ENCODE measurements at regions of chr14 and their contacts with region 1.

Region 1: GRCh38 chr14:24058260-24058950 is 6.6 kb downstream of the CARMIL3 start:
- DNase-seq: peak; percentile 84
- H3K4me3 Mint-ChIP-seq: no peak overlapping the region
- H3K27ac Mint-ChIP-seq: peak overlapping the region; percentile 19
- H3K4me1 Mint-ChIP-seq: peaks cover 6% of the 10 kb centered on the region
- H3K27me3 Mint-ChIP-seq: peaks cover 44% of the 10 kb centered on the region

Region 2: GRCh38 chr14:23861666-23862065 is 196.7 kb before region 1 on chr14:
- CTCF ChIA-PET with region 1: no interaction called
- DNase-seq: no peak
- H3K4me3 Mint-ChIP-seq: no peak overlapping the region
- H3K27ac Mint-ChIP-seq: no peak overlapping the region
- H3K4me1 Mint-ChIP-seq: no peaks in the 10 kb centered on the region
- H3K27me3 Mint-ChIP-seq: peaks cover 8% of the 10 kb centered on the region

Region 3: GRCh38 chr14:24080888-24081738 is 22.7 kb after region 1 on chr14:
- CTCF ChIA-PET with region 1: interaction called, 54 read pairs
- DNase-seq: peak; percentile 87
- H3K4me3 Mint-ChIP-seq: peak overlapping the region; percentile 75
- H3K27ac Mint-ChIP-seq: peak overlapping the region; percentile 75
- H3K4me1 Mint-ChIP-seq: peaks cover 35% of the 10 kb centered on the region
- H3K27me3 Mint-ChIP-seq: peaks cover 50% of the 10 kb centered on the region

Region 4: GRCh38 chr14:24086193-24086955 is 28.0 kb after region 1 on chr14:
- CTCF ChIA-PET with region 1: interaction called, 240 read pairs
- DNase-seq: no peak
- H3K4me3 Mint-ChIP-seq: no peak overlapping the region
- H3K27ac Mint-ChIP-seq: no peak overlapping the region
- H3K4me1 Mint-ChIP-seq: peaks cover 15% of the 10 kb centered on the region
- H3K27me3 Mint-ChIP-seq: peaks cover 33% of the 10 kb centered on the region

Region 5: DNA sequence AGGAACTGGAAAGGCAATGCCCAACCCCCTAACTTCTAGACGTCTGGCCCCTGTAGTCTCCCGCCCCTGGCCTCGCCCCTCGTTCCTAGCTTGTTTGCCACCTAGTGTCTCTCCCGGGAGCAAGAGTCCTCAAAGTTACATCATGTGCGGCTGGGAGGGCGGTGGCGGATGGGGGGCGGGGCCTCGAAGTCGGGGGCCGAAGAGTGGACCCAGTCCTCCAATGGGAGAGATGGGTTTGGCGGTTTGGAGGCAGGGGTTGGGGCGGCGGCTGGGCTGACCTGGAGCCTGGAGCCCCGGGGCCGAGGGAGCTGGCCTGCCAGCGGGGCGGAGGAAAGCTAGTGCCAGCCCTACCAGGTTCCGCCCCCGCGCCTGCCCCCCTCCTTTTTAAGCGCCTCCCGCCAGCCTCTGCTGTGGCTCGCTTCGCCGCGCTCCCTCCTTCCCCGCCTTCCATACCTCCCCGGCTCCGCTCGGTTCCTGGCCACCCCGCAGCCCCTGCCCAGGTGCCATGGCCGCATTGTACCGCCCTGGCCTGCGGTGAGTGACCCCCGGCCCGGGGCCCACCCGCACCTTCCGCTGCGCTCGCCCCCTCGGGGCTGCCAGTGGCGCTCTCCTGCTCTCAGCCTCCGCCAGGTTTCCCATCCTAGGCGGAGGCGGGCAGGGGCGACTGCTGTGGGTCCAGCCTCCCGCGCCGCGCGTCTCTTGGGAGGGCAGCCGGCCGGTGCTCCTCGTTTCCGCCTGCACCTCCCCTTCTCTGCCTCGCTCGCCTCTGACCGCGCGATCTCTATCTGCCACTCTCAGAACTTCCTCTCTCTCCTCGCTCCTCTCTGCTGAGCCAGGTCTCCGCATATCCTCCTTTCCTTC is 35.7 kb after region 1 on chr14 and contains the start of gene PCK2:
- CTCF ChIA-PET with region 1: interaction called, 240 read pairs
- DNase-seq: peak; percentile 86
- H3K4me3 Mint-ChIP-seq: peak within 1 kb of the TSS; percentile 92
- H3K27ac Mint-ChIP-seq: peak within 1 kb of the TSS; percentile 92
- H3K4me1 Mint-ChIP-seq: peaks cover 39% of the 10 kb centered on the region
- H3K27me3 Mint-ChIP-seq: no peaks in the 10 kb centered on the region

Region 6: GRCh38 chr14:24108336-24108874 is 50.0 kb after region 1 on chr14:
- CTCF ChIA-PET with region 1: interaction called, 184 read pairs
- DNase-seq: no peak
- H3K4me3 Mint-ChIP-seq: no peak overlapping the region
- H3K27ac Mint-ChIP-seq: peak overlapping the region; percentile 97
- H3K4me1 Mint-ChIP-seq: peaks cover 37% of the 10 kb centered on the region
- H3K27me3 Mint-ChIP-seq: no peaks in the 10 kb centered on the region

Region 7: GRCh38 chr14:24160850-24161804 is 102.7 kb after region 1 on chr14 and contains the start of gene IRF9:
- CTCF ChIA-PET with region 1: interaction called, 25 read pairs
- DNase-seq: peak; percentile 98
- H3K4me3 Mint-ChIP-seq: peak within 1 kb of the TSS; percentile 97
- H3K27ac Mint-ChIP-seq: peak within 1 kb of the TSS; percentile 99
- H3K4me1 Mint-ChIP-seq: peaks cover 63% of the 10 kb centered on the region
- H3K27me3 Mint-ChIP-seq: peaks cover 6% of the 10 kb centered on the region

Region 8: DNA sequence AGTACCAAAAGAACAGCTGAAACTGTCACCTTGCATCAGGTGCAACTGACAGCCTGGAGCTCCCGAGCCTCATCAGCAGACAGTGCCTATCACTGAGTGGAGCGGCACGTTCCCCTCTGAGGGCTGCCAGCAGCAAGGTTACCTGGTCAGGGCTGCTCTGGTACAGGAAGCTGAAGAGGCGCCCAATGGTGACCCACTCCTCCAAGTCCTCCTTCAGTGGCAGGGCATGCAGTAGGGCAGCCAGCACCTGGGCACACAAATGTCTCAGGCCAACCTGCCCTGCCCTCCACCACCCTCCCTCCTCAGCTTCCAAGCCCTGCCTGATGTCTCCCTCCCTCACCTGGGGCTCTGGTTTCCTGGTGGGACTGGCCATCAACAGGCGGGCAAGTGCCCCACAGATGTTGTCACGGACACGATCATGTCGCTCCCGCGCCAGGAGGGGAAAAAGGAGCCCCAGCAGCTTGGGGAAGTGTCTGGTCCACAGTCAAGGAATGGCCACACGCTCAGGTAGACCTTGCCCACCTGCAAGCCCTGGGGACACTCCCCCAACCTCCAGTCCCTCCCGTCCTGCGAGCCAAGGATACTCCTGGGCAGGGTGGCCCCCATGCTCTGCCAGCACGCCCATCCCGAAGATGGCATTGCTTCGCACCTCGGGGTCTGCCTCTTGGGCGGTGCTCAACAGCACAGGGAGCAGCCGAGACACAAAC is 123.1 kb after region 1 on chr14:
- CTCF ChIA-PET with region 1: no interaction called
- DNase-seq: no peak
- H3K4me3 Mint-ChIP-seq: no peak overlapping the region
- H3K27ac Mint-ChIP-seq: peak overlapping the region; percentile 16
- H3K4me1 Mint-ChIP-seq: peaks cover 2% of the 10 kb centered on the region
- H3K27me3 Mint-ChIP-seq: no peaks in the 10 kb centered on the region

Region 9: GRCh38 chr14:24289649-24290249 is 231.3 kb after region 1 on chr14:
- CTCF ChIA-PET with region 1: no interaction called
- DNase-seq: peak; percentile 60
- H3K4me3 Mint-ChIP-seq: no peak overlapping the region
- H3K27ac Mint-ChIP-seq: no peak overlapping the region
- H3K4me1 Mint-ChIP-seq: peaks cover 21% of the 10 kb centered on the region
- H3K27me3 Mint-ChIP-seq: no peaks in the 10 kb centered on the region